OCI-LY7 (cell line): ENCODE measurements at regions of chr4 and their contacts with region 1.

Region 1: DNA sequence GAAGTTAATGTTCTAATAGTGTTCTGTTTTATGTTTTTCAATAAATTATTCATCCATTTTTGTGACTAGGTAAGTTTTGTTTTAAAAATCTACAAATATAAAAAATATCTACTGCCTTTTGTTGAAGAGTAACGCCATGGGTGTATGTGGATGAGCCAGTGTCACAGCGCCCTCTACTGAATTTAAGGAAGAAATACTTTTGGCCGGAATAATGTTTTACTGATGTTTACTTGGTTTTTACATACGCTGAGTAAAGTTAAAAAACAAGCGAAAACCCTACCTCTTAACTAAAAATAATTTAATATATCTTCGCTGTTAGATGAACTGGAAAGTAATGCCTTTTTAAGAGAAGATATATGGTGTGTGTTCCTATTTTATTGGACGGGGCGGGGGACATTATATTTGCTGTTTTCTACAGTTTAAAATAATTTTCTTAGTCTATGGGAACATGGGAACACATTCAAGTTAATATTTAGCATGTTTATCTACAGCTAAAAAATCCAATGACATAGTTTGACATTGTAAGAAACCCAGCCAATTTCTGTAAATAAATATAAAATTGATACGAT is 86.1 kb downstream of the CPE start:
- DNase-seq: peak; percentile 55
- H3K4me3 ChIP-seq: no peak overlapping the region
- H3K27ac ChIP-seq: no peak overlapping the region
- H3K4me1 ChIP-seq: no peaks in the 10 kb centered on the region
- CTCF ChIP-seq: peak; percentile 98

Region 2: DNA sequence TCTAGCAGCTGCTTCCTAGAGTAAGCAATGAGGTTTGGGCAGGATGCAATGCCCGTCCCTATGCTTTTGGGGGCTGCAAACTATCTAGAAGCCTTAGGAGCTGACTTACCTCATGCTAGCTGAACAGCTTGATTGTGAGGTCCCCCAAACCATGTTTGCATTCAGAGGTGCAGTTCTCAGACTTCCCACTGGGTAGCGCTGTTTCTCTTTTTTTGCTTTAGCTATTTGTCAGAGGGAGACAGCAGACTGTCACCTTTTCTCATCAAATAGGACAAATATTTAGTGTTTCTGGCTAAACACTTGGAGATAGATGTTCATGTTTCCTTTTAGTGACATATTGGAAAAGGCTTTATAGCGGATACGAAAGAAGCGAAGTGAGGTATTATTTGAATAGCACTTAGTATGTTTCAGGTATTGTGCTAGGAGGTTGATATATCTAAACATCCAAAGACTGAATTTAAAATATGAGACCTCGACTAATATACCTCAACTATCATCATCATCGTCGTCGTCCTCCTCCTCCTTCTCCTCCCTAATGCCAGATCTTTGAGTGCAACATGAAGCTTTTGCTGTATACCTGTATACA is 333.6 kb before region 1 on chr4:
- CTCF ChIA-PET with region 1: no interaction called
- POLR2A ChIA-PET with region 1: interaction called, 3 read pairs
- intact Hi-C with region 1: loop called (anchors 1 kb)
- DNase-seq: peak; percentile 71
- H3K4me3 ChIP-seq: no peak overlapping the region
- H3K27ac ChIP-seq: no peak overlapping the region
- H3K4me1 ChIP-seq: peaks cover 13% of the 10 kb centered on the region
- CTCF ChIP-seq: peak; percentile 99

Region 3: GRCh38 chr4:165355900-165356300 is 109.0 kb before region 1 on chr4:
- CTCF ChIA-PET with region 1: no interaction called
- POLR2A ChIA-PET with region 1: interaction called, 3 read pairs
- intact Hi-C with region 1: loop called (anchors 2 kb)
- DNase-seq: peak; percentile 65
- H3K4me3 ChIP-seq: no peak overlapping the region
- H3K27ac ChIP-seq: no peak overlapping the region
- H3K4me1 ChIP-seq: no peaks in the 10 kb centered on the region
- CTCF ChIP-seq: peak; percentile 84

Region 4: DNA sequence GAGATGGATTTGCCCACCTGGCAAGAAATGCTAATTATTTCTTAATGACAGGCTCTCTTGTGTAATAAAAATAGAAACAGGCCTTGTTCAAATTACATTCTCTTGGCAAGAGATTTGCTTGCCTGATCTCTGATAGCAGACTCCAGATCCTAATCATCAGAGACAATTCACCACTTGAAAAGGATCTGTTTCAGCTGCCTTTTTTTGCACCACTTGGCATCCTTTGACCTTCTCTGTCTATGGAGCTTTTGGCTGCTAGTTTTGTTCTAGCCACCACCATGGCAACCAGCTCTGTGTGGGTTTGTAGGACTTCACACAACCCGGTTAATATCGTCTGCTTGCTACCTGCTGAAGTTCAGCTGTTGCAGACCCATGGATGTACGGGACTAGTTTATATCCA is 167.0 kb after region 1 on chr4:
- CTCF ChIA-PET with region 1: no interaction called
- POLR2A ChIA-PET with region 1: no interaction called
- intact Hi-C with region 1: no loop called
- DNase-seq: no peak
- H3K4me3 ChIP-seq: no peak overlapping the region
- H3K27ac ChIP-seq: no peak overlapping the region
- H3K4me1 ChIP-seq: no peaks in the 10 kb centered on the region
- CTCF ChIP-seq: no peak

Region 5: GRCh38 chr4:165788686-165789463 is 324.0 kb after region 1 on chr4:
- CTCF ChIA-PET with region 1: no interaction called
- POLR2A ChIA-PET with region 1: no interaction called
- intact Hi-C with region 1: no loop called
- DNase-seq: no peak
- H3K4me3 ChIP-seq: no peak overlapping the region
- H3K27ac ChIP-seq: no peak overlapping the region
- H3K4me1 ChIP-seq: no peaks in the 10 kb centered on the region
- CTCF ChIP-seq: no peak